HCT116 (cell line): ENCODE measurements at regions of chr2 and their contacts with region 1.

Region 1: GRCh38 chr2:68282811-68283418 is 30.6 kb upstream of the PPP3R1 start:
- DNase-seq: peak; percentile 33
- ATAC-seq: peak; percentile 77
- H3K4me3 ChIP-seq: no peak overlapping the region
- H3K27ac ChIP-seq: no peak overlapping the region
- H3K4me1 ChIP-seq: no peaks in the 10 kb centered on the region
- H3K27me3 ChIP-seq: peaks cover 20% of the 10 kb centered on the region
- CTCF ChIP-seq: peak; percentile 69 to 75 (median 72)
- POLR2A ChIP-seq: no peak
- RAD21 ChIP-seq: peak; percentile 70

Region 2: DNA sequence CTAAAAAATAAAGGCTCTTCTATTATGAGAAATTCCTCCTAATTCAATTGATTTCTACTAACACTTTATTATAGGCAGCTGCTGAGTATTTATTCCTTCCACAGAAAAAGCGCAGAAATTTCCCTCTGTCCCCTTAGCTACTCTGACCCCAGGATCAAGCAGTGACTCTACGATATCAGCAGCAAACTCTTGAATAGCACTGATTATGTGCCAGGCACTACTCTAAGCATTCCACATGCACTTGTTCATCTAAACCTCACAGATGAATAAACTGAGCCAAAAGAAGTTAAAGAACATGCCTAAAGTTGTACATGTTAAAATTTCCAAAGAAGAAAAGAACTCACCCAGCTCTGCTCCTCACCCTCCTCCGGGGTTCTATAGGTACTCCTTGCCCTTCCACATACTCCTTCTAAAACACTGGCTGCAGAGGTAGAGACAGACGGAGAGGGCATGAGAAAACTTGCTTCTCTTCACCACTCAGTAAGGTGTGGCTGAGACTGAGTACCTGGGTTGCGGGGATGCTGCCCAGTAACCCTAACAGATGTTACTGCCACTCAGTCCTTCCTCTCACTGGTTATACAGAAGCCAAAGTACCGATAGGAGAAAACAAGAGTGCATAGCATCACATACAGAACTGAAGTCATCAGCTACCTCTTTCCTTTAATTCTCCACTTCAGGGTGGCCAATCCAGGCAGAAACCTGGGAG is 230.0 kb before region 1 on chr2:
- CTCF ChIA-PET with region 1: no interaction called
- POLR2A ChIA-PET with region 1: no interaction called
- RAD21 ChIA-PET with region 1: no interaction called
- intact Hi-C with region 1: loop called (anchors 5 kb)
- DNase-seq: no peak
- ATAC-seq: no peak
- H3K4me3 ChIP-seq: no peak overlapping the region
- H3K27ac ChIP-seq: no peak overlapping the region
- H3K4me1 ChIP-seq: no peaks in the 10 kb centered on the region
- H3K27me3 ChIP-seq: no peaks in the 10 kb centered on the region
- CTCF ChIP-seq: no peak
- POLR2A ChIP-seq: no peak
- RAD21 ChIP-seq: no peak

Region 3: GRCh38 chr2:68266655-68267054 is 16.3 kb before region 1 on chr2:
- CTCF ChIA-PET with region 1: no interaction called
- POLR2A ChIA-PET with region 1: no interaction called
- RAD21 ChIA-PET with region 1: no interaction called
- intact Hi-C with region 1: no loop called
- DNase-seq: no peak
- ATAC-seq: no peak
- H3K4me3 ChIP-seq: no peak overlapping the region
- H3K27ac ChIP-seq: no peak overlapping the region
- H3K4me1 ChIP-seq: no peaks in the 10 kb centered on the region
- H3K27me3 ChIP-seq: no peaks in the 10 kb centered on the region
- CTCF ChIP-seq: no peak
- POLR2A ChIP-seq: no peak
- RAD21 ChIP-seq: no peak

Region 4: GRCh38 chr2:68441179-68441993 is 158.5 kb after region 1 on chr2:
- CTCF ChIA-PET with region 1: interaction called, 3 read pairs
- POLR2A ChIA-PET with region 1: no interaction called
- RAD21 ChIA-PET with region 1: no interaction called
- intact Hi-C with region 1: loop called (anchors 10 kb)
- DNase-seq: peak; percentile 82
- ATAC-seq: peak; percentile 98
- H3K4me3 ChIP-seq: no peak overlapping the region
- H3K27ac ChIP-seq: no peak overlapping the region
- H3K4me1 ChIP-seq: peaks cover 0 to 4% of the 10 kb centered on the region in 2 experiments; a peak in 1 of 4 replicates
- H3K27me3 ChIP-seq: no peaks in the 10 kb centered on the region
- CTCF ChIP-seq: peak; percentile 82 to 95 (median 84)
- POLR2A ChIP-seq: no peak
- RAD21 ChIP-seq: peak; percentile 83